ENCODE measurements at regions of chr9 and their contacts with region 1.

Region 1: DNA sequence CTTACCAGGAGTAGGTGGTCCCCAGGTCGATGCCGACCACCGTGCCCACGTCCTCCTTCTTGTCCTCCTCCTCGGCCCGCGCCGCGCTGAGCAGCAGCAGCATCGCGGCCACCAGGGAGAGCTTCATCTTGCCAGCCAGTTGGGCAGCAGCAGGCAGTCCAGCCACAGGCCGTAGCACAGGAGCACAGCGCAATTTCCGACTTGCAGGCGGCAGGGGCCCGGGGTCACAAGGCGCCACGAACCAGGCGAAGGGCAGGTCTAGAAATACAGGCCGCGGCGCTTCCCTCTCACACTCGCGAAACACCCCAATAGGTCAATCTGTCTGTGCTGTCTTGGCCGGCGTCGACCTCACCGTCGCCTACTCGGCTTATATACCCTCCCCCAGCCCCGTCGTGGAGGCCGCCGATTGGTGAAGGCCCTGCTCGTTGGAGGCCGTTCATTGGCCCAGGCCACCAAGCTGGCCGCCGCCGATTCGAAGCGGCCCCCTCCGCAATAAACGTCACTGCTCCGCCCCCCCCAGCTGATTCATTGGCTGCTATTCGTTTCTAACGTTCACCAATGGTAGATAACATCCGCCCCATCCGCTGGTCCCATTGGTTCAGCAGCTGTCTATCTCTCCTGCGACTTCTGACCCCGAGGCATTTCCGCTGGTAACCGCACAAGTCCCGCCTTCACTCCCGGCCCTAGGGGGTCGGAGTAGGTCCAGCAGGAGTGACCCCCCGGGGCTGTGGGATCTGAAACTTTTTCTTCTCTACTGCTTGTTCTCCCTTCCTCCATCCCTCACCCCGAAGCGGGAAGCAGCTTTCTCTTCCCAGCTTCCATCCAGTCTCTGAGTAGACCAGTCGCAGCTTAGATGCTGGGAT is at the start of gene HSPA5:
- DNase-seq: peak; percentile 99 to 100 (median 100)
- H3K4me3 ChIP-seq: peak within 1 kb of the TSS; percentile 97
- H3K27ac ChIP-seq: peak within 1 kb of the TSS; percentile 81 to 95
- H3K4me1 ChIP-seq: peaks cover 11% of the 10 kb centered on the region
- H3K27me3 ChIP-seq: no peaks in the 10 kb centered on the region
- CTCF ChIP-seq: peak in 2 of 3 donors; percentile 30 to 36
- EP300 ChIP-seq: no peak
- POLR2A ChIP-seq: peak; percentile 91
- total RNA-seq, gene HSPA5: 67.1 to 250 (median 147) TPM

Region 2: DNA sequence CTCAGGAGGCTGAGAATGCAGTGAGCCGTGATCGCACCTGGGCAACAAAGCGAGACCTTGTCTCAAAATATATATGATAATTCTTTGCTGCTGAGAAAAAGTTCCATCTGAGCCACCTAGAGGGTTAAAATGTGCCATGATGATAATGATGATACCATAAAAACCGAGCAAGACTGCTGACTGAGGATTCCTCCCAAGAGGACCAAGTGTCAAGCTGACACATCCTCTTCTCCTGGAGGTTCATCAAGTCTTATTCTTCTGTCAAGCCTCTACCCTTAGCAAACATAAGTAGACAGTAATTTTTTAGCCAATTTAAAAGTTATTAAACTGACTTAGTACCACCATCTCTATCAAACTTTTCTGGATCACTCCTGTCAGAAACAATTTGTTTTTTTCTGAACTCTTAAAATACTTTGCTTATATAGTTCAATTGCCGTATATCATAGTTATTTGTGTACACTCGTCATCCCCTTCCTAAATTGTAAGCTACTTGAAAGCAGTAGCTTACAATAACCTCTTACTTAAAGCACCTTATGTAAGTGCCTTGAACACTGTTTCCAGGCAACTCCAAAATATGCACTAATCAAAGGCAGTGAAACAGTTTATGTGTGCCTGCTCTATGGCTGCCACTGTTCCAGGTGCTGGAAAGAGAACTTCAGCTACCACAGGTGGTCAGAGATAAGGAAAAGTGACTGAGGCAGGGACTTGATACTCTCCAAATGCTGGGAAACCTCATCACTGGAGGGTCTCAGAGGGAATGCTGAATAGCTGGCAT is 155.3 kb before region 1 on chr9:
- intact Hi-C with region 1: no loop called
- DNase-seq: no peak
- H3K4me3 ChIP-seq: no peak overlapping the region
- H3K27ac ChIP-seq: no peak overlapping the region
- H3K4me1 ChIP-seq: no peaks in the 10 kb centered on the region
- H3K27me3 ChIP-seq: no peaks in the 10 kb centered on the region
- CTCF ChIP-seq: no peak
- EP300 ChIP-seq: no peak
- POLR2A ChIP-seq: no peak

Region 3: DNA sequence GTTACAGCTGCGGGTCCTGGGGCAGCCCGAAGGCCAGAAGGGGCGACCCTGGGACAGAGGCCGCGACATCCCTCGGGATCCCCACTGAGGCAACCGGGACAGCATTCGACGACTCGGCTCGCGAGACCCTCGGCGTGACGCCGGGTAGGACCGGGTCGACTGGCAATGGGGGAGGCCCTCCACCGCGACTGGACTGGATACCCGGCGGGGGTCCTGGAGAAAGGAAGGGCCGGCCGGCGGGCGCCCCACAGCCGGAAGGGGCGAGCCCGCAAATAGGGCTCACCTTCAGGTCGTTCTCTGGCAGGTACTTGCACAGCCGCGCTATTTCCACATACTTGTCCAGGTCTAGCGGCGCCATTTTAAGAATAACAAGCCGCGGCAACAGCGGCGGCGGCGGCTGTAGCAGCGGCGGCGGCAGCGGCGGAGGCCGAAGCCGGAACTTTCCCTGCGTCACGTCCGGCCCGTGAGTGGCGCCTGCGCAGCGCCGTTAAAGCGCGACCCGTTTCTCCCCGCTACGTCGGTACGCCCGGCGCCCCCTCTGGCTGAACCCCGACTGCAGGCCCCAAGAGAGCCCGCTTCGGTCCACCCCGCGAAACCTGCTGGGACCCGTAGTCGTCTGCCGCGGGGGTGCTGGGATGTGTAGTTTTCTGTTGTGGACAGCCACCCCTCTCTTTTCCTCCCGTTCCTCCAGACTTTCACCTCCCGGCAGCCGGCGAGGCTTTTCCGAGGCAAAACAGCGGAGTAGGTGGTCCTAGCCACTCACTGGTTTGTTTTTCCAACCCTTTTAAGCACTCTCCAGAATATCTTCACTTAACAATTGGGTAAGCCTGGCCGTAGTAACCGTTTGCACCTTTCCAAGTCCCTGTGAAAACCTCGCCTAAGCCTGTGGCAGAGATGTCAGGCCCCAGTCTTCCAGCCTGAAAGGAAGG is 51.6 kb before region 1 on chr9 and contains the start of gene PPP6C:
- intact Hi-C with region 1: loop called in 1 of 4 experiments (anchors 2 kb)
- DNase-seq: peak; percentile 95 to 98 (median 96)
- H3K4me3 ChIP-seq: peak within 1 kb of the TSS; percentile 97
- H3K27ac ChIP-seq: peak within 1 kb of the TSS; percentile 75 to 87
- H3K4me1 ChIP-seq: peaks cover 8% of the 10 kb centered on the region
- H3K27me3 ChIP-seq: no peaks in the 10 kb centered on the region
- CTCF ChIP-seq: peak; percentile 70 to 87 (median 81)
- EP300 ChIP-seq: no peak
- POLR2A ChIP-seq: peak; percentile 78
- total RNA-seq, gene PPP6C: 26.8 to 39.8 (median 34.6) TPM

Region 4: DNA sequence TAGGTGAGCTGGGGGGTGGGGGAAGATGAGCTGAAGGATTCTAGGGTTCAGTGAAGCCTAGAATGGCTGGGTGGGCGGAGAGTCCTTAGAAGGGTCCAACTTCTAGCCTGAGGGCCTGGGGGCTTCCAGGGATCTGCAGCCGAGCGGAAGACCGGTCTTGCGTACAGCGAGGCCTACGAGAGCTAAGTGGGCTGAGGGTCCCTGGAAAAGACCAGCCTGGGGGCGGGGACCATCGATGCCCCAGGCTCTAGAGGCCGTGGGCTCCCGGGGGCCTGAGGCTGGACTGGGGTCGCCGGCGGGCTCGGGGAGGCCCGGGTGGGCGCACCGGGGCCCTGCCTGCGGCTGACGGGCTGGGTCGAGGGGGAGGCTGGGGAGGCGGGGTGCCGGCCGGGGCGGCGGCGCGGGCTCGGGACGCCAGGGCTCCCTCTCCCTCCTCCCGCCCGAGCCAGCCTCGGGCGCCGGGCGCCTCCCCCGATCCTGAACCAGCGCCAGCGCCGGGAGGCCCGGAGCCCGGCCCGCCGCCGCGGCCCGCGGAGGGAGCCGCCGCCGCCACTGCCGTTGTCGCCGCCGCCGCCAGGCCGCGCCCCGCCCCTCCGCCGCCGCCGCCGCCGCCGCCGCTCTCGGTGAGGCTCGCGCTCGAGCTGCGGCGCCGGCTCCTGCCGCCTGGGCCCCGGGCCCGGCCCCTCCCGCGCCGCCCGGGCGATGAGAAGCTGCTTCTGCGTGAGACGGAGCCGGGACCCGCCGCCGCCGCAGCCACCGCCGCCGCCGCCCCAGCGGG is 1085.2 kb after region 1 on chr9 and contains the start of gene MVB12B:
- intact Hi-C with region 1: loop called in 1 of 4 experiments (anchors 5 kb)
- DNase-seq: peak; percentile 29 to 67 (median 58)
- H3K4me3 ChIP-seq: peak within 1 kb of the TSS; percentile 66
- H3K27ac ChIP-seq: peak within 1 kb of the TSS; percentile 67 to 86
- H3K4me1 ChIP-seq: peaks cover 2% of the 10 kb centered on the region
- H3K27me3 ChIP-seq: no peaks in the 10 kb centered on the region
- CTCF ChIP-seq: no peak
- EP300 ChIP-seq: no peak
- POLR2A ChIP-seq: no peak
- total RNA-seq, gene MVB12B: 7.0 to 23.1 (median 17.8) TPM